MCF 10A (cell line): ENCODE measurements at regions of chr1 and their contacts with region 1.

Region 1: DNA sequence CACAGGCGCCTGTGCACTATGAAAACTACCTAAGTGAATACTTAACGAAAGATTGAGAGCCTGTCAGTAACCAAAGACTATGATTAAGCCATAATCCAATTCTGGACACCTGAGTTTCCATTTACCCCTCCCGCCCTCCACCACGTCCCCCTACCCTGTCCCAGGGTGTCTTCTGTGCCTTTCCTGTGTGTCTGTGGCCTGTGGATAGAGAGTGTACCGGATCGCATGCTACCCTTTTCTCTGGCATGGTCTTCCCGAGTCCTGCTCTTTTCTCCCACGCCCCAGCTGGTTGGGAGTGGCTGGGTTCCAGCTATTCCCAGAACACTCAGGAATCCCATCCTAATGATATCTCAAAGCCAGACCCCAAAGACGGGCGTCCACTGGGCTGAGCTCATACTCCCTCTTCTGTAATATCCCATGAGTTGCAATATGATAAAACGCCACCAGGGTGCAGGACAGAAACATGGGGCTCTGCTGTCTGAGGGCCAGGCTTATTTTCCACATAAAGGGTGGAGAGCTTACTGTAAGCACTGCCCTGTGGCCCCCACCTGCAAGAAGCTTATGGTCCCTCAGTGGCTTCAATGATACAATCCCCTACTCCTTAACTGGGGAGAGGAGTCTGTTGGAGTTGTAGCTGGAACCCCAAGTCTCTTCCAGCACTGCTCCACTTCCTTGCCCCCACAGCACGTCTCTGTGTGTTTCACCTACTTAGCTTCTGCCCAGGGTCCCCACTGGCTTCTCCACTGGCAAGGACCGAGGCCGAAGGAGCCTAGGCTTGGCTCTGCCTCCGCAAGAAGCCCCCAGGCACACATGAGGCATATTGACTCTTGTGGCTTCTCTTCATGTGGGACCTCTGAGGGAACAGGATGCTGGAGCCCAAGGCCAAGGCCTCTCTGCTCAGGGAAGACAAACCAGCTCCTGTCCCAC is 17.6 kb upstream of the ALX3 start:
- DNase-seq: peak; percentile 70
- H3K4me3 Mint-ChIP-seq: no peak overlapping the region
- H3K27ac Mint-ChIP-seq: no peak overlapping the region
- H3K4me1 Mint-ChIP-seq: no peaks in the 10 kb centered on the region
- H3K27me3 Mint-ChIP-seq: peaks cover 47% of the 10 kb centered on the region
- CTCF ChIP-seq: peak; percentile 65

Region 2: GRCh38 chr1:110060034-110060661 is 27.9 kb before region 1 on chr1:
- CTCF ChIA-PET with region 1: interaction called, 21 read pairs
- POLR2A ChIA-PET with region 1: no interaction called
- intact Hi-C with region 1: no loop called
- DNase-seq: peak; percentile 59
- H3K4me3 Mint-ChIP-seq: no peak overlapping the region
- H3K27ac Mint-ChIP-seq: no peak overlapping the region
- H3K4me1 Mint-ChIP-seq: no peaks in the 10 kb centered on the region
- H3K27me3 Mint-ChIP-seq: no peaks in the 10 kb centered on the region
- CTCF ChIP-seq: peak; percentile 82

Region 3: GRCh38 chr1:110076789-110077500 is 11.1 kb before region 1 on chr1:
- CTCF ChIA-PET with region 1: interaction called, 12 read pairs
- POLR2A ChIA-PET with region 1: no interaction called
- intact Hi-C with region 1: no loop called
- DNase-seq: no peak
- H3K4me3 Mint-ChIP-seq: no peak overlapping the region
- H3K27ac Mint-ChIP-seq: no peak overlapping the region
- H3K4me1 Mint-ChIP-seq: no peaks in the 10 kb centered on the region
- H3K27me3 Mint-ChIP-seq: no peaks in the 10 kb centered on the region
- CTCF ChIP-seq: no peak

Region 4: GRCh38 chr1:110106013-110106941 is 18.2 kb after region 1 on chr1:
- CTCF ChIA-PET with region 1: interaction called, 167 read pairs
- POLR2A ChIA-PET with region 1: interaction called, 3 read pairs
- intact Hi-C with region 1: loop called (anchors 1 kb)
- DNase-seq: peak; percentile 63
- H3K4me3 Mint-ChIP-seq: no peak overlapping the region
- H3K27ac Mint-ChIP-seq: no peak overlapping the region
- H3K4me1 Mint-ChIP-seq: no peaks in the 10 kb centered on the region
- H3K27me3 Mint-ChIP-seq: peaks cover 35% of the 10 kb centered on the region
- CTCF ChIP-seq: peak; percentile 93

Region 5: GRCh38 chr1:110118636-110119615 is 30.9 kb after region 1 on chr1:
- CTCF ChIA-PET with region 1: interaction called, 11 read pairs
- POLR2A ChIA-PET with region 1: no interaction called
- intact Hi-C with region 1: no loop called
- DNase-seq: peak; percentile 16
- H3K4me3 Mint-ChIP-seq: no peak overlapping the region
- H3K27ac Mint-ChIP-seq: no peak overlapping the region
- H3K4me1 Mint-ChIP-seq: no peaks in the 10 kb centered on the region
- H3K27me3 Mint-ChIP-seq: peaks cover 24% of the 10 kb centered on the region
- CTCF ChIP-seq: no peak